CD4-positive, alpha-beta T cell (primary cell): ENCODE measurements at regions of chr3 and their contacts with region 1.

Region 1: DNA sequence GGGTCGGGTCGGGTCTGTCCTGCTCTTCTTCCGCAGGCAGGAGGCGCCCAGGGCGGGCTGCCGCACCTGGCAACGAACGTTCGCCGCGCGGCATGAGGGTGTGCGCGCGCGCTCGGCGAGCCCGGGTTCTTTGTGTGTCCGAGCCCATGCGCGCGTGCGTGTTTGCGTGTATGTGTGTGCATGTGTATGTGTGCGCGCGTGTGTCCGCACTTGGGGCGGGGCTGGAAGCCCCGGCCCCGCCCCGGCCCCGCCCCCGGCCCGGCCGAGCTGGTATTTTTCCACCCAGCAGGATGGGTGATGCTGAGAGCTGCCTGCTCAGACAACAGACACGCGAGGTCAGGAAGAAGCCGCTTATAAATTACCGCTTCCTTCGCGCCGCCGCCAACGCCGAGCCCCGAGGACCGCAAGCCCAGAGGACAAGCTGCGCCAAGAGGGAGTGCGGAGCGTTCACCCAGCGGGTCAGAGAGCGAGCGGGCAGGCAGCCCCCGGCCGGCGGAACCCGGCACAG is at the start of gene SLC6A6:
- DNase-seq: peak; percentile 88 to 99 (median 95)
- ATAC-seq: peak; percentile 81
- H3K4me3 ChIP-seq: peak within 1 kb of the TSS; percentile 67
- H3K4me3 Mint-ChIP-seq: peak within 1 kb of the TSS; percentile 96
- H3K27ac ChIP-seq: peak within 1 kb of the TSS; percentile 62 to 82
- H3K27ac Mint-ChIP-seq: peak within 1 kb of the TSS; percentile 90
- H3K4me1 ChIP-seq: peaks cover 52% of the 10 kb centered on the region
- H3K4me1 Mint-ChIP-seq: peaks cover 55% of the 10 kb centered on the region
- H3K27me3 ChIP-seq: no peaks in the 10 kb centered on the region
- H3K27me3 Mint-ChIP-seq: no peaks in the 10 kb centered on the region
- CTCF ChIP-seq: peak; percentile 59
- total RNA-seq, gene SLC6A6: 27.8 to 31.2 TPM

Region 2: DNA sequence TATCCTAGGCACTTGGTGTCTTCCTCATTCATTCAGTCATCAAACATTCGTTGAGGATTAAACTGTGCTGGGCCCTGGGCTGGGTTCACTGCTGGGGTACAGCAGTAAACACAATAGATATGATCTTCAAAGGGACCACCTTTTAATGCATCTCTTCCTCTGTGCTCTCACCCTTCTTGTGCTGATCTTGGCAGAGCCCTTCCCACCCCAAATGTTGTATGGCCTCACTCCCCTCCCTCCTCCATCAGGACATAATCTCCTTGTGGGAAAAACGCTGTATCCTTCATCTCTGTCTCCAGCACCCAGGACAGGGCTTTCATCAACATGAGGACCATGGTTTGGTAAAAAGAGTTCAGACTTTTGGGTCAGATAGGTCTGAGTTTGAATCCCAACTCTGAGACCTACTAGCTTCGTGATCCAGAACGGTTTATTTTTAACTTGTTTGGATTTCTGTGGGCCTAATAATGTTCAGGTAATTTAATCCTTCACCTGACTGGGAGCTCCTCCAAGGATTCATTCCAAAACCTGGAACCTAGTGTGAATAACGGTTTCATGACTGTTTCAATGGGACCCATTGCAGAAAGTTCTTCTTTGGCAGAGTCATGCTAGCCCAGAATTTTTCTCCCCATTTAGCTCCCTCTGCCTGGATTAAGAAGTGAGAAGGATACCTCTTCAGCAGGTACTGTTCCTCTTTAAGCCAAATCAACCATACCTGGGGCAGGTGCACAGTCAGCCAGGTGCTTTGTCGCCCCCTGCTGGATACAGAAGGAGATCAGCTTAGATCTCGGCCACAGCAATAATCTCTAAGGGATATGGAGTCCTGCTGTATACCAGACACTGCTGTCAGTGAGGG is 517.3 kb before region 1 on chr3:
- CTCF ChIA-PET with region 1: interaction called, 5 read pairs
- POLR2A ChIA-PET with region 1: interaction called, 12 read pairs
- intact Hi-C with region 1: loop called in 1 of 2 experiments (anchors 5 kb)
- DNase-seq: peak; percentile 61 to 88 (median 72)
- ATAC-seq: peak; percentile 79
- H3K4me3 ChIP-seq: no peak overlapping the region
- H3K4me3 Mint-ChIP-seq: peak overlapping the region; percentile 78
- H3K27ac ChIP-seq: no peak overlapping the region
- H3K27ac Mint-ChIP-seq: peak overlapping the region; percentile 3
- H3K4me1 ChIP-seq: peaks cover 27% of the 10 kb centered on the region
- H3K4me1 Mint-ChIP-seq: peaks cover 22% of the 10 kb centered on the region
- H3K27me3 ChIP-seq: peaks cover 4 to 13% of the 10 kb centered on the region in 2 experiments
- H3K27me3 Mint-ChIP-seq: peaks cover 15% of the 10 kb centered on the region
- CTCF ChIP-seq: peak; percentile 95

Region 3: GRCh38 chr3:14203521-14204079 is 198.8 kb before region 1 on chr3:
- CTCF ChIA-PET with region 1: no interaction called
- POLR2A ChIA-PET with region 1: no interaction called
- intact Hi-C with region 1: loop called in 1 of 2 experiments (anchors 5 kb)
- DNase-seq: peak in 13 of 14 experiments; percentile 10 to 74 (median 26)
- ATAC-seq: peak; percentile 64
- H3K4me3 ChIP-seq: no peak overlapping the region
- H3K4me3 Mint-ChIP-seq: no peak overlapping the region
- H3K27ac ChIP-seq: no peak overlapping the region
- H3K27ac Mint-ChIP-seq: no peak overlapping the region
- H3K4me1 ChIP-seq: peaks cover 3% of the 10 kb centered on the region
- H3K4me1 Mint-ChIP-seq: no peaks in the 10 kb centered on the region
- H3K27me3 ChIP-seq: no peaks in the 10 kb centered on the region
- H3K27me3 Mint-ChIP-seq: no peaks in the 10 kb centered on the region
- CTCF ChIP-seq: peak; percentile 77

Region 4: GRCh38 chr3:14431892-14432834 is 29.8 kb after region 1 on chr3:
- CTCF ChIA-PET with region 1: interaction called, 42 read pairs
- POLR2A ChIA-PET with region 1: interaction called, 107 read pairs
- intact Hi-C with region 1: loop called (anchors 1 kb)
- DNase-seq: peak; percentile 84 to 98 (median 94)
- ATAC-seq: peak; percentile 84
- H3K4me3 ChIP-seq: peak overlapping the region; percentile 31
- H3K4me3 Mint-ChIP-seq: peak overlapping the region; percentile 60
- H3K27ac ChIP-seq: peak overlapping the region; percentile 92 to 97
- H3K27ac Mint-ChIP-seq: peak overlapping the region; percentile 98
- H3K4me1 ChIP-seq: peaks cover 93% of the 10 kb centered on the region
- H3K4me1 Mint-ChIP-seq: peaks cover 92% of the 10 kb centered on the region
- H3K27me3 ChIP-seq: no peaks in the 10 kb centered on the region
- H3K27me3 Mint-ChIP-seq: no peaks in the 10 kb centered on the region
- CTCF ChIP-seq: no peak

Region 5: GRCh38 chr3:14511628-14512280 is 109.4 kb after region 1 on chr3:
- CTCF ChIA-PET with region 1: no interaction called
- POLR2A ChIA-PET with region 1: no interaction called
- intact Hi-C with region 1: no loop called
- DNase-seq: peak in 2 of 14 experiments; percentile 6 to 24
- ATAC-seq: no peak
- H3K4me3 ChIP-seq: no peak overlapping the region
- H3K4me3 Mint-ChIP-seq: no peak overlapping the region
- H3K27ac ChIP-seq: no peak overlapping the region
- H3K27ac Mint-ChIP-seq: no peak overlapping the region
- H3K4me1 ChIP-seq: peaks cover 5% of the 10 kb centered on the region
- H3K4me1 Mint-ChIP-seq: peaks cover 5% of the 10 kb centered on the region
- H3K27me3 ChIP-seq: no peaks in the 10 kb centered on the region
- H3K27me3 Mint-ChIP-seq: no peaks in the 10 kb centered on the region
- CTCF ChIP-seq: no peak

Region 6: GRCh38 chr3:14651440-14652251 is 249.3 kb after region 1 on chr3 and contains the start of gene CCDC174:
- CTCF ChIA-PET with region 1: no interaction called
- POLR2A ChIA-PET with region 1: interaction called, 11 read pairs
- intact Hi-C with region 1: loop called in 1 of 2 experiments (anchors 1 kb)
- DNase-seq: peak; percentile 90 to 100 (median 94)
- ATAC-seq: peak; percentile 97
- H3K4me3 ChIP-seq: peak within 1 kb of the TSS; percentile 75
- H3K4me3 Mint-ChIP-seq: peak within 1 kb of the TSS; percentile 87
- H3K27ac ChIP-seq: peak within 1 kb of the TSS; percentile 76 to 97
- H3K27ac Mint-ChIP-seq: peak within 1 kb of the TSS; percentile 85
- H3K4me1 ChIP-seq: peaks cover 29% of the 10 kb centered on the region
- H3K4me1 Mint-ChIP-seq: peaks cover 61% of the 10 kb centered on the region
- H3K27me3 ChIP-seq: no peaks in the 10 kb centered on the region
- H3K27me3 Mint-ChIP-seq: no peaks in the 10 kb centered on the region
- CTCF ChIP-seq: no peak
- total RNA-seq, gene CCDC174: 32.9 to 37.5 TPM

Region 7: GRCh38 chr3:15647611-15648167 is 1245.3 kb after region 1 on chr3:
- CTCF ChIA-PET with region 1: no interaction called
- POLR2A ChIA-PET with region 1: no interaction called
- intact Hi-C with region 1: no loop called
- DNase-seq: peak in 13 of 14 experiments; percentile 24 to 82 (median 40)
- ATAC-seq: peak; percentile 93
- H3K4me3 ChIP-seq: peak overlapping the region; percentile 11
- H3K4me3 Mint-ChIP-seq: peak overlapping the region; percentile 74
- H3K27ac ChIP-seq: no peak overlapping the region
- H3K27ac Mint-ChIP-seq: peak overlapping the region; percentile 50
- H3K4me1 ChIP-seq: peaks cover 49% of the 10 kb centered on the region
- H3K4me1 Mint-ChIP-seq: peaks cover 56% of the 10 kb centered on the region
- H3K27me3 ChIP-seq: no peaks in the 10 kb centered on the region
- H3K27me3 Mint-ChIP-seq: no peaks in the 10 kb centered on the region
- CTCF ChIP-seq: no peak